ENCODE measurements at regions of chr12 and their contacts with region 1.

Region 1: DNA sequence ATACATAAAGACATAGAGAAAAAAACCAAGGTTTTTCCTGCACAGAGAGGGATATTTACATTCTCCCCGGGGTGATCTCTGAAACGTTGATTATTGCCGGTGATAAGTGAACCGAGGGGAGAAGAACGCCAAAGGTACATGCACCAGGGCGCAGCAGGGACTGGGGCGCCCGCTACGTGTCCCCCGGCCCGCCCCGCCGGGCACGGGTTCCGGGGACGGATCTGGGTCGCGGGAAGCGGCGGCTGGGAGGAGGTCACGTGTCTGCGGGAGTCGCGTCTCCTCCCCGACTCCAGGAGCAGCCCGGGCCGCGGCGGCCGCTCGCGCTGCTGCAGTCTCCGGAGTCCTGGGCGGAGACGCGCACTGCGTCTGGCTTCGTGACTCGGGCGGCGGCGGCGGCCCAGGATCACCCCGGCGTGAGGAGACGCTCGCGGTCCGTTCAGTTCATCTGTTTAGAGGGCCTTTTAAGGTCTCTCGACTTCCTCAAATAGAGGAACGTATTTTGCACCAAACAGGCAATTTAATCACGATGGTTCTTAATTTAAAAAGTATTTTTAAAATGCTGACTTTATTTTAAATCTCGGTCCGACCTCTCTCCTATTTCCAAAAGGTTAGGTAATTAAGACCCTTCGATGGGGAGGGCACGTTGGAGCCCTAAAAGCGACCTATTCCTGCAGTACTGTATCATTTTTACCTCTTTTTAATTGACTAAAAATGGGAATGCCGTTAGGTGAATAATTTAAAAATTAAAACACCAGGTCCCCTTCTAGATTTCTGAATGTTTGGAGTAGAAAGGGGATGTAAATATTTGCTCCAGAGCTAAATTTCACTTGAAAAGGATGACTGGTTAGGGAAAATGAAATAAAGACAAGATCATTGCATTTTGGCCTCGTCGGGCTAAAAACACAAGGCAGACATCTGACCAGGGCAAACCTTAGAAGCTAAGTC is 1.8 kb upstream of the BHLHE41 start:
- DNase-seq: peak; percentile 79
- H3K4me3 Mint-ChIP-seq: peak overlapping the region; percentile 88
- H3K27ac Mint-ChIP-seq: no peak overlapping the region
- H3K4me1 Mint-ChIP-seq: peaks cover 28% of the 10 kb centered on the region
- H3K27me3 Mint-ChIP-seq: peaks cover 80% of the 10 kb centered on the region

Region 2: DNA sequence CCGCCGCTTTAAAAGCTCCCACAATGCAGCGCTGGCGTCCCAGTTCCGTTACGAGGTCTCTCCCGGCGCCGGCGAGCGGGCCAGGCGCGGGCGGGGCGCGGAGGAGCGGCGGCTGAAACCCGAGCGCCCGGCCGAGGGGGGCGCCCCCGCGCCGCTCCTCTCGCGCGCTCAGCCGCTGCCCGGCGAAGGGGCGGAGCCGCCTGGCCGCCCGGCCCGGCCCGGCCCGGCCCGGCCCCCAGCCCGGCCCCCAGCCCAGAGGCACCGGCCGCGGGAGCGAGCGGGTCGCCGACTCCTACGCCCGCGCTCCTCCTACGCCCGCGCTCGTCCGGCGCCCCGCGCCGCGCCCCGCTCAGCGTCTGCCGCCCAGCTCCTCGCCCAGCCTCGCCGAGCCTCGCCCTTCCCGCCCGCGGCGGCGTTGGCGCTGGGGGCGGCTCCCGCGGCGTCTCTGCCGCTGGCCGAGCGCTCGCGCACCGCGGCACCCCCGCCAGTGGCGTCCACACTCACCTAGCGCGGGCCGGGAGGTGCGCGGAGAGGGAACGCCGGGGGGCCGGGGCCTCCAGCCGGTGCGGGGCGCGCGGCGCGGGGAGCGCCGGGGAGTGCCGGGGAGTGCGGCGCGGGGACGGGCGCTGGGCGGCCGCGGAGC is 168.1 kb before region 1 on chr12 and contains the start of gene RASSF8:
- intact Hi-C with region 1: loop called (anchors 5 kb)
- DNase-seq: peak; percentile 72
- H3K4me3 Mint-ChIP-seq: peak within 1 kb of the TSS; percentile 82
- H3K27ac Mint-ChIP-seq: peak within 1 kb of the TSS; percentile 54
- H3K4me1 Mint-ChIP-seq: peaks cover 12% of the 10 kb centered on the region
- H3K27me3 Mint-ChIP-seq: peaks cover 64% of the 10 kb centered on the region
- total RNA-seq, gene RASSF8: 0.17 and 0.37 TPM in 2 replicates

Region 3: GRCh38 chr12:26195641-26196420 is 69.2 kb after region 1 on chr12:
- intact Hi-C with region 1: loop called (anchors 5 kb)
- DNase-seq: no peak
- H3K4me3 Mint-ChIP-seq: peak overlapping the region; percentile 77
- H3K27ac Mint-ChIP-seq: no peak overlapping the region
- H3K4me1 Mint-ChIP-seq: no peaks in the 10 kb centered on the region
- H3K27me3 Mint-ChIP-seq: peaks cover 62% of the 10 kb centered on the region

Region 4: GRCh38 chr12:26651566-26652188 is 525.1 kb after region 1 on chr12:
- intact Hi-C with region 1: loop called (anchors 5 kb)
- DNase-seq: peak; percentile 85
- H3K4me3 Mint-ChIP-seq: no peak overlapping the region
- H3K27ac Mint-ChIP-seq: no peak overlapping the region
- H3K4me1 Mint-ChIP-seq: peaks cover 4% of the 10 kb centered on the region
- H3K27me3 Mint-ChIP-seq: no peaks in the 10 kb centered on the region